GM12878 (cell line): ENCODE measurements at regions of chr9 and their contacts with region 1.

Region 1: GRCh38 chr9:123716339-123716945 is 213.5 kb downstream of the DENND1A start:
- DNase-seq: peak; percentile 43
- ATAC-seq: peak; percentile 89
- H3K4me3 ChIP-seq: no peak overlapping the region
- H3K27ac ChIP-seq: no peak overlapping the region
- H3K4me1 ChIP-seq: peaks cover 22% of the 10 kb centered on the region
- H3K27me3 ChIP-seq: no peaks in the 10 kb centered on the region
- CTCF ChIP-seq: no peak
- EP300 ChIP-seq: no peak
- POLR2A ChIP-seq: no peak
- RAD21 ChIP-seq: no peak

Region 2: DNA sequence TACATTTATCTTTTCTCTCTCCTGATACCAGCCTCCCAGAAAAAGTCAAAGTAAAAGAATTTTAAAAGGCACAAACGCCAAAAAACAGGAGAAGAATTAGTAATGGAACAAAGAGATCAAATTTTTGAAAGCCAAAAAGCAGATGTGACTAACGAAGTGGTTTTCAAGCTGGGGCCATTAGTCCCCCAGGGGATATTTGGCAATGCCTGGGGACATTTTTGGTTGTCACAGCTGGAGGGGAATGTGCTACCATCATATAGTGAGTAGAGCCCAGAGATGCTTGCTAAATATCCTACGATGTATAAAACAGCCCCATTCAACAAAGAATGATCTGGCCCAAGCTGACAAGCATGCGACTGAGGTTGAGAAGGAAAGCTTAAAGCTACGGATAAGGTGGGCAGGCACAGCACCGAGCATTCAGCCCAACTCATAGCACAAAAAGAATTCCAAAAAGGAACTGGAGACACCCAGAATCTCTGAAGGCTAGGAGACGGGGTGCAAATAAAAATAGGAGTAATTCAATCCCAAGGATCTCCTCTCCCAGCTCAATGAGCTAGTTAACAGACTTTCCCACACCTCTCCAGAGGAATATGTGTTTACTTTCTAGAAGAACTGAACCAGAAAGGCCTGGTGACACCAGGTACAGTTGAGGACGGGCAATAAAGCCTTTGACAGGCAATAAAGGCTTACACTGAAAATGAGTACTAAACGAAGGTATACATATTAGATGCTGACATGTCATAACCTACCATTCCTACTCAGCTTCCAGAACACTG is 55.6 kb before region 1 on chr9:
- CTCF ChIA-PET with region 1: no interaction called
- POLR2A ChIA-PET with region 1: no interaction called
- RAD21 ChIA-PET with region 1: no interaction called
- SMC1A ChIA-PET with region 1: interaction called, 13 read pairs
- in situ Hi-C with region 1: no loop called
- intact Hi-C with region 1: no loop called
- DNase-seq: no peak
- ATAC-seq: peak; percentile 60
- H3K4me3 ChIP-seq: no peak overlapping the region
- H3K27ac ChIP-seq: no peak overlapping the region
- H3K4me1 ChIP-seq: no peaks in the 10 kb centered on the region
- H3K27me3 ChIP-seq: no peaks in the 10 kb centered on the region
- CTCF ChIP-seq: no peak
- EP300 ChIP-seq: no peak
- POLR2A ChIP-seq: no peak
- RAD21 ChIP-seq: no peak

Region 3: DNA sequence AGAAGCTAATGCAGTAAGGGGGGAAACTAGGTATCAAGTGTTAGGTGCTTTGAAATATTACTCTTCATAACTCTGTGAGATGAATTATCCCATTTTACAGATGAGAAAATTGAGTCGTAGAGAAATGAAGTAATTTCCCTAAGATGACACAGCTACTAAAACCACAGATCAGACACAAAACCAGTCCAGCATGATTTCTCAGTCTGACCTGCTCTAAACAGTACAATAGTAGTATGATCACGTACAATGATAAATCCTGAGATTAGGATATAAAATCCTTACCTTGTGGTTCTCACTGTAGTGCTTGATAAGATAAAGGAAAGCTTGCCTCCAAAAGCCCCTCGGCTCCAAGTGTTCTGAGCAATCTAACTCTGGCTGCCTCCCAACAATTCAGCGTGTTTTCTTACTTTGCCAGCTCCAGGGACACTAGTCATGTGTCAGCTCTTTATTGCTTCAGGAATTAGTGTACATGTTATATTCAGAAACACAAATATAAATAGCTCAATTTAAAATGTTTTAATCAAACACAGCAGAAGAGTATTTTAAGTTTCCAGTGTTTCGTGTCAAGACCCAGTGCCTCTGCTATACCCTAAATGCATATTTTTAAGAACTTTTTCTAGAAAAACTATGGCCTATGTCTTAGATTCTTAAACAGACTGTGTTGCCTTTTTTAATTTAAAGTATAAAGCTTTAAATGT is 30.2 kb before region 1 on chr9:
- CTCF ChIA-PET with region 1: interaction called, 4 read pairs
- POLR2A ChIA-PET with region 1: interaction called, 5 read pairs
- RAD21 ChIA-PET with region 1: interaction called, 11 read pairs
- SMC1A ChIA-PET with region 1: interaction called, 37 read pairs
- in situ Hi-C with region 1: no loop called
- intact Hi-C with region 1: no loop called
- DNase-seq: no peak
- ATAC-seq: peak; percentile 8; the same call in 1 of the 3 replicates
- H3K4me3 ChIP-seq: no peak overlapping the region
- H3K27ac ChIP-seq: no peak overlapping the region
- H3K4me1 ChIP-seq: peaks cover 33% of the 10 kb centered on the region
- H3K27me3 ChIP-seq: no peaks in the 10 kb centered on the region
- CTCF ChIP-seq: no peak
- EP300 ChIP-seq: no peak
- POLR2A ChIP-seq: no peak
- RAD21 ChIP-seq: no peak

Region 4: DNA sequence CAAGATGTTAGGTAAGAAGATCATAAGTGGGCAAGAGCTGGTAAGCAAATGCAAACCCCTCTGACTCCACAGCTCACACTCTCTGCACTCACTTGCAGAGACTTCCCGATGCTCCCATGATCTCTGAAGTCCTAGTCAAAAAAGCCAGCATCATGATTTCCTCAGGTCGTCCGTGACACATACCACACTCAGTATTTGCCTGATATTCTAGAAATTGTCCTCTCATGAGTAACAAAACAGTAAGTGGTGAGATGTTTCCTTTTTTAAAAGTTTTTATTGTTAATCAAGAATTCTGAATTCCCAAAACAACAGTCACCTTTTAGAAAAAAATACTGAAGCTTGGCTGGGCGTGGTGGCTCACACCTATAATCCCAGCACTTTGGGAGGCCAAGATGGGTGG is 18.9 kb after region 1 on chr9:
- CTCF ChIA-PET with region 1: interaction called, 7 read pairs
- POLR2A ChIA-PET with region 1: interaction called, 3 read pairs
- RAD21 ChIA-PET with region 1: no interaction called
- SMC1A ChIA-PET with region 1: interaction called, 11 read pairs
- in situ Hi-C with region 1: no loop called
- intact Hi-C with region 1: no loop called
- DNase-seq: no peak
- ATAC-seq: no peak
- H3K4me3 ChIP-seq: no peak overlapping the region
- H3K27ac ChIP-seq: no peak overlapping the region
- H3K4me1 ChIP-seq: peaks cover 4% of the 10 kb centered on the region; the same call in 1 of the 2 replicates
- H3K27me3 ChIP-seq: no peaks in the 10 kb centered on the region
- CTCF ChIP-seq: no peak
- EP300 ChIP-seq: no peak
- POLR2A ChIP-seq: no peak
- RAD21 ChIP-seq: no peak

Region 5: DNA sequence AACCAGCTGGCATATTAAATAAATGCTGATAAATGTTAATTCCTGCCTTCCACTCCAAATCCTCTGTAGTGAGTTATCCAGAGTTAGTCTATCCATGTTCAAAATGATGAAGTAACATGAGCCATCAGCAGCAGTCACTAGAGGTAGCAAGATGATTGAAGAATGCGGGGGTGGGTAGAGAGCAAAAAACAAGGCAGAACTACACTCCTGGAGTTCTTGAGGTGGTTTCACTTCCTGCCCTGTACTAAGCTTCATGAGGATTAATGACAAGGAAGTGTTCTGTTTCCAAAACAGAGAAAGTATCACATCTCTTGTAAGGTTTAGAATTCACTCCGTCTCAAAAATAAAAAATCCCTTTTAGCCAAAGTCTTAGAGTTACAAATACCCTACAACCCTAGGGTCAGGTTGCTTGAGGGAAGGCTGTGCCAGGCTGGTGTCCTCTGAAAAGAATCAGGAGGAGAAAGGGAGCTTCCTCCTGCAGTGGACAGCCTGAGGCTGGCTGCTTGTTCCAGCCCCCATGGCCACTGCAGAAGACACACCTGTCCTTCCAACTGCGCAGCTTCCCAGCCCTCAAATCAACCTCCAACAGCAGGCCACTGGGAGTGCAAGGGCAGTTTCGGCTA is 33.2 kb after region 1 on chr9:
- CTCF ChIA-PET with region 1: no interaction called
- POLR2A ChIA-PET with region 1: no interaction called
- RAD21 ChIA-PET with region 1: interaction called, 6 read pairs
- SMC1A ChIA-PET with region 1: interaction called, 36 read pairs
- in situ Hi-C with region 1: no loop called
- intact Hi-C with region 1: no loop called
- DNase-seq: peak; percentile 40
- ATAC-seq: peak; percentile 90
- H3K4me3 ChIP-seq: no peak overlapping the region
- H3K27ac ChIP-seq: peak overlapping the region; percentile 60
- H3K4me1 ChIP-seq: peaks cover 21% of the 10 kb centered on the region
- H3K27me3 ChIP-seq: no peaks in the 10 kb centered on the region
- CTCF ChIP-seq: peak in 1 of 3 experiments; percentile 26; a peak in 2 of 6 replicates
- EP300 ChIP-seq: 0 out of 4 replicates have a peak, but pooled peaks of 1 of the 2 experiments have one; percentile 29
- POLR2A ChIP-seq: no peak
- RAD21 ChIP-seq: peak; percentile 52